ENCODE measurements at regions of chr17 and their contacts with region 1.

Region 1: GRCh38 chr17:35808962-35809854 is at the start of gene TAF15:
- DNase-seq: peak; percentile 97
- ATAC-seq: peak; percentile 90
- H3K4me3 Mint-ChIP-seq: peak within 1 kb of the TSS; percentile 89
- H3K27ac Mint-ChIP-seq: peak within 1 kb of the TSS; percentile 100
- H3K4me1 Mint-ChIP-seq: peaks cover 61% of the 10 kb centered on the region
- H3K27me3 Mint-ChIP-seq: no peaks in the 10 kb centered on the region
- CTCF ChIP-seq: peak; percentile 74
- total RNA-seq, gene TAF15: 309 to 319 TPM

Region 2: GRCh38 chr17:35578197-35578928 is 230.8 kb before region 1 on chr17 and contains the start of gene PEX12:
- CTCF ChIA-PET with region 1: interaction called, 3 read pairs
- POLR2A ChIA-PET with region 1: interaction called, 16 read pairs
- intact Hi-C with region 1: no loop called
- DNase-seq: peak; percentile 94
- ATAC-seq: peak; percentile 94
- H3K4me3 Mint-ChIP-seq: peak within 1 kb of the TSS; percentile 100
- H3K27ac Mint-ChIP-seq: peak within 1 kb of the TSS; percentile 100
- H3K4me1 Mint-ChIP-seq: peaks cover 28% of the 10 kb centered on the region
- H3K27me3 Mint-ChIP-seq: no peaks in the 10 kb centered on the region
- CTCF ChIP-seq: no peak
- total RNA-seq, gene PEX12: 5.1 to 5.6 TPM

Region 3: DNA sequence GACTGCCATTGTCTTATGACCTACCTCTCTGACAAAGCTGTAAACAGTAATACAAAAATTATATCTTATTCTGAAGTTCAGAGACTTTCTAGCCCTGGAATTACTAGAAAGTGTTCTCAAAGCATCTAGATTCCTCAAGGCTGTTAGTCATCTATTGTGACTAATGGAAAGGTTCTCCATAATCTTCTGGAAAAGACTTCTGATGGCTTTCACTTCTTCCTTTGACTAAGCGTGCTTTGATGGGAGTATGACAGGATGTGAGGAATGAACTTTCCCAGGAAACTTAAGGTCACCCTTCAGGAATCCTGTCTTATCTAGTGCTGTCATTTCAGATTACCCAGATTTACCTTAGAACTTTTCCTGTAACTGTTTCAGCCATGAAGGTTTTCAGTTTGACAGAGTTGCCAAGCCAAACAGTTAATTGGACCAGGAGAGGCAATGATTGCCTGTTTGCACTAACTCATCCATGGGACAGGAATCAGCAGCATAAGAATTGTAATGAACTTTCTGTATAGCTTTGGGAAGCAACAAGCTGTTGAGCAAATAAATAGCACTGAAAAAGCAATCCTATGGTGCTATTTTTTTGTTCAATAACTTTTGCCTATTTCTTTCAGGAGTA is 178.6 kb before region 1 on chr17:
- CTCF ChIA-PET with region 1: no interaction called
- POLR2A ChIA-PET with region 1: no interaction called
- intact Hi-C with region 1: no loop called
- DNase-seq: no peak
- ATAC-seq: no peak
- H3K4me3 Mint-ChIP-seq: no peak overlapping the region
- H3K27ac Mint-ChIP-seq: no peak overlapping the region
- H3K4me1 Mint-ChIP-seq: no peaks in the 10 kb centered on the region
- H3K27me3 Mint-ChIP-seq: no peaks in the 10 kb centered on the region
- CTCF ChIP-seq: no peak

Region 4: DNA sequence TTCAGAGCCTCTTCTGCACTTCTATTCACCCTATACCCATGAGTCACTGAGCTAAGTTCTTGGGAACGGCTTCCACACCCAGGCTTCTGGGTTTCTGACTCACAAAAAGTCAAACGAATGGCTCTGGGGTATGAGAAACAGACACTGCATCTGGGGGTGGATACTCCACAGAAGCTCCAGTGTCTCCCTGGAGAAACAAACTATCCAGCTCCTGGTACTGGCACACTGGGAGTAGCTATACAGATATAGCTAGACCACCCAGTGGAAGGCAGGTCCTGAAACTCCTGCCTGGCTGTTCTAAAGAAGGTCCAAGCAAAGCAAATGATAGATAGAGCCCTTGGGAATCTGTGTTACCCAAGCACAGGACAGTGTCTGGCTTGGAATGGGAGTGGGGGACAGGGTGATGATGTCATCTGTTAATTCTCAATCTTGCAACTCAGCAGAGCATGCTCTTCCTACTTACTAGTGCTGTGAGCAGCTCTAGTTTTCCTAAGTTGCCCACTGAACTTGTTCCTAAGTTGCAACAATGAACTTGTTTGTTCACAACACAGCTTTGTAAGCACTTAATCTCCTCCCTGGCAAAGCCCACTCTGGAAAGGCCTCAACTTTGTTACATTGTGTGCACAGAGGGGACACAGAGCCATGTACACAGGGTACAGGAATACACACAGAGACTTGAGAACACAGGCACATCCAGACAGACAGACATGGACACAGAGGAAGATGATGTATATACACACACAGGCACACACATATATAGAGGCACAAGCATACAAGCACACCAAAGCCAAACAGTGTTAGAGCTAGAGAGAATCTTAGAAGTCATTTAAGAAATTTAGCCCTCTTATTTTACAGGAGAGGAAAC is 20.5 kb before region 1 on chr17:
- CTCF ChIA-PET with region 1: interaction called, 23 read pairs
- POLR2A ChIA-PET with region 1: interaction called, 50 read pairs
- intact Hi-C with region 1: no loop called
- DNase-seq: no peak
- ATAC-seq: peak; percentile 58
- H3K4me3 Mint-ChIP-seq: no peak overlapping the region
- H3K27ac Mint-ChIP-seq: no peak overlapping the region
- H3K4me1 Mint-ChIP-seq: peaks cover 12% of the 10 kb centered on the region
- H3K27me3 Mint-ChIP-seq: peaks cover 5% of the 10 kb centered on the region
- CTCF ChIP-seq: no peak

Region 5: GRCh38 chr17:35794988-35795824 is 14.0 kb before region 1 on chr17 and contains the start of gene MMP28:
- CTCF ChIA-PET with region 1: interaction called, 23 read pairs
- POLR2A ChIA-PET with region 1: interaction called, 50 read pairs
- intact Hi-C with region 1: no loop called
- DNase-seq: peak; percentile 64
- ATAC-seq: peak; percentile 79
- H3K4me3 Mint-ChIP-seq: peak within 1 kb of the TSS; percentile 68
- H3K27ac Mint-ChIP-seq: no peak within 1 kb of the TSS
- H3K4me1 Mint-ChIP-seq: peaks cover 17% of the 10 kb centered on the region
- H3K27me3 Mint-ChIP-seq: peaks cover 20% of the 10 kb centered on the region
- CTCF ChIP-seq: no peak
- total RNA-seq, gene MMP28: 0.41 TPM in 1 of 2 experiments, not detected in the other

Region 6: GRCh38 chr17:35947156-35947585 is 138.0 kb after region 1 on chr17:
- CTCF ChIA-PET with region 1: no interaction called
- POLR2A ChIA-PET with region 1: no interaction called
- intact Hi-C with region 1: no loop called
- DNase-seq: peak; percentile 76
- ATAC-seq: peak; percentile 95
- H3K4me3 Mint-ChIP-seq: no peak overlapping the region
- H3K27ac Mint-ChIP-seq: no peak overlapping the region
- H3K4me1 Mint-ChIP-seq: peaks cover 7% of the 10 kb centered on the region
- H3K27me3 Mint-ChIP-seq: no peaks in the 10 kb centered on the region
- CTCF ChIP-seq: peak; percentile 85